Activated CD4-positive, alpha-beta T cell treated with anti-CD3 and anti-CD28 coated beads for 36 hours (primary cell): ENCODE measurements at regions of chr10 and their contacts with region 1.

Region 1: GRCh38 chr10:101889256-101890210 is 45.9 kb upstream of the KCNIP2 start:
- DNase-seq: peak; percentile 89
- ATAC-seq: peak; percentile 80
- H3K4me3 Mint-ChIP-seq: no peak overlapping the region
- H3K27ac Mint-ChIP-seq: no peak overlapping the region
- H3K4me1 Mint-ChIP-seq: peaks cover 4% of the 10 kb centered on the region
- H3K27me3 Mint-ChIP-seq: no peaks in the 10 kb centered on the region

Region 2: DNA sequence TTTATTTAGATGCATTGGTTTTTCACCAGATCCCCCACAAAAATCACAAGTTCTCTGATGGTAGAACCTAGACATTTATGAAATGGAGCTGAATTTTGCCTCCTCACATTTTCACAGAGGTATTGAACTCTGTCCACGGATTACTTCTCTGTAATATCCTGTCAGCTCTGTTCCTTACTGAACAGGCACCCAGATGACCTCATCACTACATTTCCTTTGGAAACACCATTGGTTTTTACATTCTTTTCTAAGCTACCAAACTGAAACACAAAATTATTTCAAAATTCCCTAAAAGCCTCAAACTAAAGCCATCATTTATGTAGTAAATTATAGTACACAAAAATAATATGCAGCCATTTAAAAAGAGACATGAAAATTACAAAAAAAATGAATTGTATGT is 52.3 kb after region 1 on chr10:
- CTCF ChIA-PET with region 1: interaction called, 11 read pairs
- POLR2A ChIA-PET with region 1: no interaction called
- intact Hi-C with region 1: no loop called
- DNase-seq: no peak
- ATAC-seq: no peak
- H3K4me3 Mint-ChIP-seq: no peak overlapping the region
- H3K27ac Mint-ChIP-seq: no peak overlapping the region
- H3K4me1 Mint-ChIP-seq: peaks cover 6% of the 10 kb centered on the region
- H3K27me3 Mint-ChIP-seq: no peaks in the 10 kb centered on the region

Region 3: DNA sequence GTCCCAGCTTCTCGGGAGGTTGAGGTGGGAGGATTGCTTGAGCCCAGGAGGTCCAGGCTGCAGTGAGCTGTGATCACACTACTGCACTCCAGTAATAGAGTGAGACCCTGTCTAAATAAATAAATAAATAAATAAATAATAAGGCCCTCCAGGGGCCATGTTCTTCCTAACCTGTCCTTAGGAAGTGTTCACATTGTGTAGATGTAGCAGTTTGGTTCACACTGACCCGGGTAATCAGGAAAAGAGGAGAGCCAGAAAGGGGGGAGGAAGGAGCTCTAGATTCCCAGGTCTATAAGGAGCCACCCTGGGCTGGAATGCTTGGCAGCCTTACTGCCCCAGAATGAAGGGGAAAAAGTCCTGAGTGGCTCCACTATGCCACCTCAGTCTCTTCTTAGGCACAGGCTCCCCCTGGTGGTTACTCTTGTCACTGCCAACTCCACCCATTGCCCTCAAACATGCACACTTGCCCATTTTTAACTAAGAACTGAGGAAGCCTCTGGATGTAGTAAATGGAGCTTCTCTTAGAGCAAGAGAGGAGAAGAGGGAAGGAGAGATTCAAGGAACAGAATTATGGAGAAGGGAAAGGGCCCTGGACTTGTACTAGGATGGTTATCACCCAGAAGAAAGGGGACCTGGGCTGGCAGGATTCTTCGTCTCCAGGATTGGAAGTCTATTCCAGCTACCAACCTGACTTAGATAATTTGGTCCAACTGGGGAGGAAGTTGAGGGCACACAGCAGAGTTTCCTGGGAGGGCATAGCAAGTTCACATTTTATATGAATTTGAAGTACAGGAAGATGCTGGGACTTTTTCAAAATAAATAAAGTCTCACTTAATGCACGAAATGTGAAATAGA is 183.4 kb after region 1 on chr10:
- CTCF ChIA-PET with region 1: interaction called, 22 read pairs
- POLR2A ChIA-PET with region 1: no interaction called
- intact Hi-C with region 1: loop called (anchors 1 kb)
- DNase-seq: peak; percentile 89
- ATAC-seq: peak; percentile 97
- H3K4me3 Mint-ChIP-seq: no peak overlapping the region
- H3K27ac Mint-ChIP-seq: no peak overlapping the region
- H3K4me1 Mint-ChIP-seq: peaks cover 2% of the 10 kb centered on the region
- H3K27me3 Mint-ChIP-seq: no peaks in the 10 kb centered on the region